ENCODE measurements at regions of chr11 and their contacts with region 1.

Region 1: DNA sequence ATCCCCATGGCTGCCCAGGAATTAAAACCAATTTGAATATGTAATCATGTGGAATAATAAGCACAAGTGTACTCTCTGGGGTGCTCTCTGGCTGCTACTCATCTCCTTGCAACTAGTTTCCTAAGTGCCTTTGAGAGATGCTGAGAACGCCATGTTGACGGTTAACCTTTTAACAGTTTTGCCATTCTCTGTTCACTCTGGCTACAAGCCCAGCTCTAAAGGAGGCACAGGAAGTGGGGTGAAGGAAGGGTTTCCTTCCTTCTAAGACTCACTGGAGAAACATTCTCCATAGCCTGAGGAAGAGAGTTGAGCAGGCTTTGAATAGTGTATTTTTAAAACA is 122.0 kb upstream of the ZC3H12C start:
- DNase-seq: peak; percentile 65
- H3K4me3 Mint-ChIP-seq: peak overlapping the region; percentile 72
- H3K27ac Mint-ChIP-seq: peak overlapping the region; percentile 86
- H3K4me1 Mint-ChIP-seq: peaks cover 35% of the 10 kb centered on the region
- H3K27me3 Mint-ChIP-seq: peaks cover 12% of the 10 kb centered on the region

Region 2: DNA sequence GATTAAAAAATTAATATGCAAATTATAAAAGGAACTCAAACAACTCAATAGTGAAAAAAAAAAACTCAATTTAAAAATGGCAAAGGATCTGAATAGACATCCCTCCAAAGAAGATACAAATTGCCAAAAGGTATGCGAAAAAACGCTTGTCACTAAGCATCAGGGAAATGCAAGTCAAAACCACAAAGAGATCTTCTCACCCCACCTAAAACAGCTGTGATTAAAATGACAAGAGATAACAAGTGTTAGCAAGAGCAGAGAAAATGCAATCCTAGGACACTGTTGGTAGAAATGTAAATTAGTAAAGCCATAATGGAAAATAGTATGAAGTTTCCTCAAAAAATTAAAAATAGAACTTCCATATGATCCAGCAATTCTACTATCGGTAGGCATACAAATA is 44.2 kb before region 1 on chr11:
- intact Hi-C with region 1: no loop called
- DNase-seq: no peak
- H3K4me3 Mint-ChIP-seq: no peak overlapping the region
- H3K27ac Mint-ChIP-seq: no peak overlapping the region
- H3K4me1 Mint-ChIP-seq: no peaks in the 10 kb centered on the region
- H3K27me3 Mint-ChIP-seq: peaks cover 6% of the 10 kb centered on the region

Region 3: GRCh38 chr11:109984634-109985289 is 13.6 kb after region 1 on chr11:
- intact Hi-C with region 1: loop called (anchors 1 kb)
- DNase-seq: no peak
- H3K4me3 Mint-ChIP-seq: no peak overlapping the region
- H3K27ac Mint-ChIP-seq: no peak overlapping the region
- H3K4me1 Mint-ChIP-seq: peaks cover 13% of the 10 kb centered on the region
- H3K27me3 Mint-ChIP-seq: peaks cover 7% of the 10 kb centered on the region

Region 4: GRCh38 chr11:110077831-110078325 is 106.7 kb after region 1 on chr11:
- intact Hi-C with region 1: loop called (anchors 2 kb)
- DNase-seq: peak; percentile 80
- H3K4me3 Mint-ChIP-seq: peak overlapping the region; percentile 43
- H3K27ac Mint-ChIP-seq: peak overlapping the region; percentile 95
- H3K4me1 Mint-ChIP-seq: peaks cover 26% of the 10 kb centered on the region
- H3K27me3 Mint-ChIP-seq: peaks cover 5% of the 10 kb centered on the region

Region 5: GRCh38 chr11:110086892-110087309 is 115.7 kb after region 1 on chr11:
- intact Hi-C with region 1: loop called (anchors 1 kb)
- DNase-seq: no peak
- H3K4me3 Mint-ChIP-seq: no peak overlapping the region
- H3K27ac Mint-ChIP-seq: no peak overlapping the region
- H3K4me1 Mint-ChIP-seq: peaks cover 8% of the 10 kb centered on the region
- H3K27me3 Mint-ChIP-seq: peaks cover 20% of the 10 kb centered on the region